CD4-positive, alpha-beta memory T cell (primary cell): ENCODE measurements at regions of chr12 and their contacts with region 1.

Region 1: DNA sequence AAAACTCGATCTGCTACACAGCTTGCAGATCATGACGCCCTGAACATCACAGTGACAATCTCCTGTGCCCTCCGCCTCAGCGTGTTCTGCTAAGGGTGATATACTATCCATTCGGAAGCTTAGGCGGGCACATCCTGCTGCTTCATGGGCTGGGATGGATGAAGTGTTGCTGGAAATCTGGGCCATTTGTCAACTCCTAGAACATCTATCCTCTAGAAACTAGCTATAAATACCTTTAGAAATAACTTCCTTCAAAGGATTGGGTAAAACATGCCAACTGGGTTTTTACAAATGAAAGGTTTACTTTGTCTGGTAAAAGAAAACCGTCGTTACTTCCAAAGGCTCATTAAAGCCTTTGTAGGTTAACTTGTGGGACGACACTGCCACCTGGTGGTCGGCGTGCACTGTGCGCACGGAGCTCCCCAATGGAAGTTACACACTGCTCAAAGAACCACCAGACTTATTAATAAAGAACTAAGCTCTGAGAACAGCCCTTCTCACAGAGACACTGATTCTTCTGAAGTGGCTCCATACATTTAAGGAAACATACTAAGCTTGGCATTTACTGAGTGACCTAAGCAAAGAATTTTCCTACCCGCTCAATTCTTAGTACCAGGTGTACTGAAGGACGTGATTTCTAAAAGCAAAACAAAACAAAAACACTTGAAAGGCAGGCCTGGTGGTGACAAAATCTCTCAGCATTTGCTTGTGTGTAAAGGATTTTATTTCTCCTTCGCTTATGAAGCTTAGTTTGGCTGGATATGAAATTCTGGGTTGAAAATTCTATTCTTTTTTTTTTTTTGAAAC is 21.6 kb upstream of the CACNA2D4 start:
- DNase-seq: peak; percentile 81 to 87 (median 83)
- H3K4me3 ChIP-seq: no peak overlapping the region
- H3K4me3 Mint-ChIP-seq: no peak overlapping the region
- H3K27ac ChIP-seq: no peak overlapping the region
- H3K27ac Mint-ChIP-seq: peak overlapping the region in 4 of 7 donors; percentile 37 to 68 (median 52)
- H3K4me1 ChIP-seq: peaks cover 5% of the 10 kb centered on the region
- H3K4me1 Mint-ChIP-seq: peaks cover 4 to 6% (median 5%) of the 10 kb centered on the region in 4 donors
- H3K27me3 ChIP-seq: no peaks in the 10 kb centered on the region
- H3K27me3 Mint-ChIP-seq: no peaks in the 10 kb centered on the region

Region 2: GRCh38 chr12:1661553-1662335 is 278.3 kb before region 1 on chr12:
- CTCF ChIA-PET with region 1: interaction called, 118 read pairs
- POLR2A ChIA-PET with region 1: interaction called, 4 read pairs
- intact Hi-C with region 1: no loop called
- DNase-seq: peak; percentile 84 to 92 (median 90)
- H3K4me3 ChIP-seq: peak overlapping the region in 1 of 2 donors; percentile 49
- H3K4me3 Mint-ChIP-seq: peak overlapping the region; percentile 72 to 84 (median 82)
- H3K27ac ChIP-seq: no peak overlapping the region
- H3K27ac Mint-ChIP-seq: peak overlapping the region; percentile 88 to 93 (median 91)
- H3K4me1 ChIP-seq: peaks cover 16% of the 10 kb centered on the region
- H3K4me1 Mint-ChIP-seq: peaks cover 22 to 55% (median 29%) of the 10 kb centered on the region in 4 donors
- H3K27me3 ChIP-seq: no peaks in the 10 kb centered on the region
- H3K27me3 Mint-ChIP-seq: no peaks in the 10 kb centered on the region

Region 3: DNA sequence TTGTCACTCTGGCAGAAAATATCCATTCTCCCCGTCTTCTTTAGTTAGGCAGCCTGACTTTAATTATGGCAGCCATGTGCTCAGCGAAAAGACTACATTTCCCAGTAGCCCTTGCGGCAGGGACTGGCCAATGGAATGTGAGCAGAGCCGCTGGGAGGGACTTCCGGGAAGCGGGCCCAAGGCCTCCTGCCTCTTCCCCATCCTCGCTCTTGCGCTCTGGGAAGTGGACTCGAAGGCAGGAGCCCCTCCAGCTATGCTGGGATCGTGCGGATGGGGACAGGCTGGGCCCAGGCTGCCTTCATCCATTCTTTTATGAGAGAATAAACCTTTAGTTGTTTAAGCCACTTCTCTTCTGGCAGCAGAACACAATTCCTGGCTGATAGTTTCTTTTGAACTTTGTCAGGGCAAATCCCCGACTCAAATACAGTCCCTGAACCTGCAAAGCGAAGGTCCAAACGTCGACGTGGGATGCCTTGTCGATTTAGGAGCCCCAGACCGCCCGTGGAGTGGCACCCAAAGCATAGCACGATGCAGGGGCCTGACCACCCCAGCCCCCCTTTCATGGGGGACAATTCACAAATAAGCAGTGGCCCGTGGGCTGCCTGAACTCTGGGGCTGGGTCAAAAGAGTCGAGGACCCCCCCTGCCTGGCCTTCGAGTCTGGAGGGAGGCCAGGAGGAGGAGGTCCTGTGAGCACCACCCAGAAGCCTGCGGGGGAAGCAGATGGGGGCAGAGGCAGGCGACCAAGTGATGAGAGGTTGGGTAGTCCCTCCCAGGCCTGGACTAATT is 135.3 kb before region 1 on chr12:
- CTCF ChIA-PET with region 1: interaction called, 15 read pairs
- POLR2A ChIA-PET with region 1: interaction called, 14 read pairs
- intact Hi-C with region 1: no loop called
- DNase-seq: peak; percentile 81 to 89 (median 84)
- H3K4me3 ChIP-seq: peak overlapping the region in 1 of 2 donors; percentile 28
- H3K4me3 Mint-ChIP-seq: peak overlapping the region in 6 of 8 donors; percentile 1 to 57 (median 38)
- H3K27ac ChIP-seq: peak overlapping the region; percentile 32
- H3K27ac Mint-ChIP-seq: peak overlapping the region; percentile 57 to 92 (median 89)
- H3K4me1 ChIP-seq: peaks cover 20% of the 10 kb centered on the region
- H3K4me1 Mint-ChIP-seq: peaks cover 2 to 16% (median 10%) of the 10 kb centered on the region in 4 donors
- H3K27me3 ChIP-seq: no peaks in the 10 kb centered on the region
- H3K27me3 Mint-ChIP-seq: no peaks in the 10 kb centered on the region

Region 4: GRCh38 chr12:1927751-1928351 is 12.2 kb before region 1 on chr12:
- CTCF ChIA-PET with region 1: interaction called, 12 read pairs
- POLR2A ChIA-PET with region 1: no interaction called
- intact Hi-C with region 1: no loop called
- DNase-seq: no peak
- H3K4me3 ChIP-seq: no peak overlapping the region
- H3K4me3 Mint-ChIP-seq: no peak overlapping the region
- H3K27ac ChIP-seq: no peak overlapping the region
- H3K27ac Mint-ChIP-seq: no peak overlapping the region
- H3K4me1 ChIP-seq: peaks cover 6% of the 10 kb centered on the region
- H3K4me1 Mint-ChIP-seq: peaks cover 8 to 15% (median 11%) of the 10 kb centered on the region in 4 donors
- H3K27me3 ChIP-seq: no peaks in the 10 kb centered on the region
- H3K27me3 Mint-ChIP-seq: peaks cover 4 to 6% of the 10 kb centered on the region in 2 donors

Region 5: GRCh38 chr12:1993341-1993740 is 53.3 kb after region 1 on chr12:
- CTCF ChIA-PET with region 1: interaction called, 13 read pairs
- POLR2A ChIA-PET with region 1: interaction called, 4 read pairs
- intact Hi-C with region 1: no loop called
- DNase-seq: peak in 1 of 5 donors; percentile 52
- H3K4me3 ChIP-seq: no peak overlapping the region
- H3K4me3 Mint-ChIP-seq: peak overlapping the region in 3 of 8 donors; percentile 33 to 66 (median 58)
- H3K27ac ChIP-seq: no peak overlapping the region
- H3K27ac Mint-ChIP-seq: peak overlapping the region; percentile 62 to 86 (median 74)
- H3K4me1 ChIP-seq: peaks cover 38% of the 10 kb centered on the region
- H3K4me1 Mint-ChIP-seq: peaks cover 33 to 49% (median 40%) of the 10 kb centered on the region in 4 donors
- H3K27me3 ChIP-seq: no peaks in the 10 kb centered on the region
- H3K27me3 Mint-ChIP-seq: no peaks in the 10 kb centered on the region

Region 6: DNA sequence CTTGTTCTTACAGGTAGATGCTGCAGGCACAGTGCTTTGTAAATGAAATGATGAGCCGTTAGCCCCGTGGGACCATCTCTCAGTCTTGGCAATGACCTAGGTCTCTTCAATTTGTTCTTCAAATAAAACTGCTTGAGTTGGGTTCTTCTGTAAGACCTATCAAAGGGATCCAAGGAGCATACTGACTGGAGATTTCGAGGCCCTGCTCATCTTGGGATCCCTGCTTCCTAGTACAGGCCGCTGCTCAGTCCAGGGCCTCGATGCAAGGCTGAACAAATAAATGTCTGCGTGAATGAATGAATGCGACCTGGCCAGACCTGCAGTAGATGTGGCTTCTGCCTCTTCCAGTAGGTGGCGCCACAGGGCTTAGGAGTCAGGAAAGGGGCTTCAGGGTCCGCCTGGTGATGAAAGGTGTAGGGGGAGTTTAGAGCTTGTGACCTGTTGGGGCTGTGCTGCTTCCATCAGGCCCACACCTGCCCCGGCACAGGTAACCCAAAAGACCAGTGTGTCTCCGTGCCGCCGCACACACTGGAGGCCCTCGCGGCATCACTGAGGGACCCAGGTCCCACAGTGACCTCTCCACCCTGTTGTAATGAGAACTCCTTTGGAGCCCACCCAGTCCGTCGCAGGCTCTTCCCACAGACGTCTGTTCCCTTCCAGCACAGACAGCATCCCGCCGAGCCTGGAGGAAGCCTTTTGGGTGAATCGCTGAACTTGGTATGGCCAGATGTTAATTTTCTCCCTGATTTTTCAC is 117.2 kb after region 1 on chr12:
- CTCF ChIA-PET with region 1: no interaction called
- POLR2A ChIA-PET with region 1: no interaction called
- intact Hi-C with region 1: no loop called
- DNase-seq: no peak
- H3K4me3 ChIP-seq: no peak overlapping the region
- H3K4me3 Mint-ChIP-seq: no peak overlapping the region
- H3K27ac ChIP-seq: no peak overlapping the region
- H3K27ac Mint-ChIP-seq: no peak overlapping the region
- H3K4me1 ChIP-seq: peaks cover under 1% of the 10 kb centered on the region
- H3K4me1 Mint-ChIP-seq: peaks cover 7 to 14% (median 10%) of the 10 kb centered on the region in 4 donors
- H3K27me3 ChIP-seq: peaks cover 15% of the 10 kb centered on the region
- H3K27me3 Mint-ChIP-seq: peaks cover 25 to 30% of the 10 kb centered on the region in 2 donors